Heart right ventricle (tissue), 16 donors: ENCODE measurements at regions of chr4 and their contacts with region 1.

Region 1: DNA sequence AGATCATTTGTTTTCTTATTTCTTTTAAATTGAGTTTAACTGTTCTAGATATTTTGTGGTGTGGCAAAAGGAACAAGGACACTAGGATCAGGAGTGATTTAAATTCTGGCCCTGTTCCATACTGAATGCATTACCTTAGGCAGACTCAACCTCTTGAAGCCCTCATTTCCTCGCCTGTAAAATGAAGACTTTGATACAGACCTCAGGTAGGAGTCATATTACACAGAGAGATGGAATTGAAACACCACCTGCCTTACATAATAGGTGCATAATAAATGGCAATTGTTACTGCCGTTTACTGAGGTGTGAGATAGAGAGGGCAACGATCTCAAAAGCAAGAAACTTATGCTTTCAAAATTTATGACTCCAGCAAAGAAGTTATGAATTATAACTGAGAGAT is 28.2 kb upstream of the RASSF6 start:
- DNase-seq: no peak
- ATAC-seq: no peak
- H3K4me3 ChIP-seq: no peak overlapping the region
- H3K27ac ChIP-seq: no peak overlapping the region
- H3K4me1 ChIP-seq: no peaks in the 10 kb centered on the region
- H3K27me3 ChIP-seq: peaks cover 0 to 13% (median 0%) of the 10 kb centered on the region in 7 donors
- CTCF ChIP-seq: no peak

Region 2: DNA sequence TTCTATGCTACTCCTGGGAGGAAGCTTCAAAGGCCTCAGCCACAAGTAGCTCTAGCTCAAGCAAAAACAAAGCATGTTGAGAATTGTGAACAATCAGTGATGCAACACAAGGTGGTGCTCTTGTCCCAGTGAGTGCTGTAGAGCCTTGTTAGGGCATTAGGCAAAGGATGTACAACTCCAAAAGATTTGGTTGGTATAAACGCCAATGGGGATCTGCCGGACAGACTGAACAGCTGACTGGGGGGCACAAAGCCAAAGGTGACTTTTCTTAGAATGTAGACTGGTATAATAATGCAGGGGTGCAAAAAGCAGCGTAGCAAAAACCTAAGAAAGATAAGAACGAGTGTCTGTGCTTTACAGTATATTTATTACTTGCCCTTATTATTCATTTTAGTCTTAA is 307.0 kb before region 1 on chr4:
- intact Hi-C with region 1: loop called in 3 of 10 experiments (anchors 10 kb)
- DNase-seq: no peak
- ATAC-seq: no peak
- H3K4me3 ChIP-seq: no peak overlapping the region
- H3K27ac ChIP-seq: no peak overlapping the region
- H3K4me1 ChIP-seq: no peaks in the 10 kb centered on the region
- H3K27me3 ChIP-seq: peaks cover 0 to 9% (median 0%) of the 10 kb centered on the region in 7 donors
- CTCF ChIP-seq: peak in 8 of 9 donors; percentile 12 to 49 (median 38)